ENCODE measurements at regions of chr14 and their contacts with region 1.

Region 1: GRCh38 chr14:68816262-68816942 is 23.5 kb upstream of the ZFP36L1 start:
- DNase-seq: peak; percentile 85
- H3K4me3 Mint-ChIP-seq: peak overlapping the region; percentile 49
- H3K27ac Mint-ChIP-seq: peak overlapping the region; percentile 88
- H3K4me1 Mint-ChIP-seq: peaks cover 20% of the 10 kb centered on the region
- H3K27me3 Mint-ChIP-seq: no peaks in the 10 kb centered on the region
- CTCF ChIP-seq: peak; percentile 98

Region 2: GRCh38 chr14:67883717-67884116 is 932.7 kb before region 1 on chr14:
- CTCF ChIA-PET with region 1: interaction called, 12 read pairs
- POLR2A ChIA-PET with region 1: interaction called, 3 read pairs
- intact Hi-C with region 1: loop called (anchors 2 kb)
- DNase-seq: peak; percentile 8
- H3K4me3 Mint-ChIP-seq: no peak overlapping the region
- H3K27ac Mint-ChIP-seq: no peak overlapping the region
- H3K4me1 Mint-ChIP-seq: peaks cover 6% of the 10 kb centered on the region
- H3K27me3 Mint-ChIP-seq: no peaks in the 10 kb centered on the region
- CTCF ChIP-seq: peak; percentile 38

Region 3: GRCh38 chr14:69346710-69347109 is 530.3 kb after region 1 on chr14:
- CTCF ChIA-PET with region 1: no interaction called
- POLR2A ChIA-PET with region 1: no interaction called
- intact Hi-C with region 1: no loop called
- DNase-seq: peak; percentile 38
- H3K4me3 Mint-ChIP-seq: no peak overlapping the region
- H3K27ac Mint-ChIP-seq: no peak overlapping the region
- H3K4me1 Mint-ChIP-seq: no peaks in the 10 kb centered on the region
- H3K27me3 Mint-ChIP-seq: peaks cover 31% of the 10 kb centered on the region
- CTCF ChIP-seq: peak; percentile 37